Activated CD4-positive, alpha-beta memory T cell treated with anti-CD3 and anti-CD28 coated beads for 36 hours (primary cell): ENCODE measurements at regions of chr12 and their contacts with region 1.

Region 1: DNA sequence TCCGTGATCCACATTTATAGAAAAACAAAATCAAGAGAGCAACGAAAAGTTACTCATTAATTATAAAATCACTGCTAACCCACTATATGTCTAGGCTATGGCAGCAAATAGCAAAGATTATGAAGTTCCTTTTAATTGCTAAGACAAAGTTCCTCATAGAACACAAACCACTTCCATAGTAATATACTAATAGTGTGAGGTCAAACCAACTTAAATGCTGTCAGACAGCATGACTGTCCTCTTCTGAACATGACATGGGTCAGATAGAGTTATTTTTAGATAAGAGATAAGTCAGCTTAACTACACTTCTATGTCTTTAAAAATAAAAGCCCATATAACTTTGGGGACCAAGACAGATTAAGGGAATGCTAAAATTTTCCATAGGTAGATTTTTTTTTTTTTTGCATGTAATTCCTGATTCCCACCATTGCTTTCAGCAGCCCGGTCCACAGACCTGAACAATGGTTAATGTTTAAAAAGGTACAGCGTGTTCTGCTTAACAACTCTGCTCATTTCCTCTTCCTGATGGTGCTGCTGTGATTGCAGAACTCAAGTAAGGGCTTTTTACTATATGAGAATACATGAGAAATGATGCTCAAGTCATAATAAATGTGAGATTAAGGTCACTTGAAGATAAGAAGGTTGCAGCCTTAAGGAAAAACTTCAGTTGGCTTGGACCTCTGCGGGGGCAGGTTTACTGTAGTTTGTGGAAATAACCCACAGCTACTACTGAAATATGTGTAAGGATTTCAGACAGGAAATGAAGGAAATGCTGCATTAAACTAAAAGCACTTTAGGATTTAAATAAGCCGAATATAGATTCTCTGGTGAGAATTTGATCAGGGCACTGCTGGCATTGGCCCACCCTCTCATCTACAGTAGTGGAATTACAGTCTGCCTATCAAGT is 37.7 kb upstream of the DUSP6 start:
- DNase-seq: peak; percentile 64
- H3K4me3 Mint-ChIP-seq: no peak overlapping the region
- H3K27ac Mint-ChIP-seq: no peak overlapping the region
- H3K4me1 Mint-ChIP-seq: peaks cover 20% of the 10 kb centered on the region
- H3K27me3 Mint-ChIP-seq: no peaks in the 10 kb centered on the region

Region 2: DNA sequence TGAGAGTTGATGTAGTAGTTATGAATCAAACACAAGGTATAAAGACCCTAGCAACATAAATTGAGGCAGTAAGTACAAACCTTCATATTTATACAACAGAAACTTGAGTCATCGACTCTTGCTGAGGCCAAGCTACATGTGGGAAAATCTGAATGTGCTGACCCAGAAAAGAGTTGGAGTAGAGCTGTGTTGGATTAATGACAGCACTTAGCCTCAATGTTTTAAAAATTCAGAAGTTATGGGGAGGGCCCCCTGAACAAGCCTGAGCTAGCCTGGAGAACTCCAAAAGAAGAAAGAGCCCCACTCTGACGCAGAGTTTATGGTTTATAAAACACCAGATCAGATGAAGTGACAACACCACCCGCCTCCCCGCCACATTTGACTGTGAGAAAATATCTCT is 137.7 kb before region 1 on chr12:
- CTCF ChIA-PET with region 1: no interaction called
- POLR2A ChIA-PET with region 1: no interaction called
- intact Hi-C with region 1: loop called (anchors 5 kb)
- DNase-seq: peak; percentile 21
- H3K4me3 Mint-ChIP-seq: no peak overlapping the region
- H3K27ac Mint-ChIP-seq: peak overlapping the region; percentile 81
- H3K4me1 Mint-ChIP-seq: peaks cover 34% of the 10 kb centered on the region
- H3K27me3 Mint-ChIP-seq: no peaks in the 10 kb centered on the region

Region 3: GRCh38 chr12:89376202-89376529 is 13.8 kb before region 1 on chr12:
- CTCF ChIA-PET with region 1: no interaction called
- POLR2A ChIA-PET with region 1: no interaction called
- intact Hi-C with region 1: loop called (anchors 1 kb)
- DNase-seq: no peak
- H3K4me3 Mint-ChIP-seq: no peak overlapping the region
- H3K27ac Mint-ChIP-seq: peak overlapping the region; percentile 62
- H3K4me1 Mint-ChIP-seq: peaks cover 20% of the 10 kb centered on the region
- H3K27me3 Mint-ChIP-seq: no peaks in the 10 kb centered on the region